Panc1 (cell line): ENCODE measurements at regions of chr5 and their contacts with region 1.

Region 1: GRCh38 chr5:56951946-56952691 is at the start of gene MIER3:
- DNase-seq: no peak
- ATAC-seq: peak; percentile 99
- H3K4me3 ChIP-seq: peak within 1 kb of the TSS; percentile 82 to 84
- H3K27ac ChIP-seq: peak within 1 kb of the TSS; percentile 85
- H3K4me1 ChIP-seq: peaks cover 10% of the 10 kb centered on the region
- H3K27me3 ChIP-seq: peaks cover 12% of the 10 kb centered on the region; the same call in 1 of the 2 replicates
- CTCF ChIP-seq: no peak
- total RNA-seq, gene MIER3: 29.7 TPM

Region 2: GRCh38 chr5:57102905-57103255 is 150.8 kb after region 1 on chr5:
- CTCF ChIA-PET with region 1: no interaction called
- POLR2A ChIA-PET with region 1: interaction called, 11 read pairs
- in situ Hi-C with region 1: no loop called
- intact Hi-C with region 1: no loop called
- DNase-seq: no peak
- ATAC-seq: no peak
- H3K4me3 ChIP-seq: no peak overlapping the region
- H3K27ac ChIP-seq: no peak overlapping the region
- H3K4me1 ChIP-seq: no peaks in the 10 kb centered on the region
- H3K27me3 ChIP-seq: no peaks in the 10 kb centered on the region
- CTCF ChIP-seq: no peak

Region 3: GRCh38 chr5:57291894-57292293 is 339.8 kb after region 1 on chr5:
- CTCF ChIA-PET with region 1: no interaction called
- POLR2A ChIA-PET with region 1: no interaction called
- in situ Hi-C with region 1: no loop called
- intact Hi-C with region 1: no loop called
- DNase-seq: no peak
- ATAC-seq: no peak
- H3K4me3 ChIP-seq: no peak overlapping the region
- H3K27ac ChIP-seq: no peak overlapping the region
- H3K4me1 ChIP-seq: no peaks in the 10 kb centered on the region
- H3K27me3 ChIP-seq: no peaks in the 10 kb centered on the region
- CTCF ChIP-seq: no peak